Activated T-helper 1 cell treated with anti-CD3 and anti-CD28 coated beads, Interleukin-12 subunit alpha, Interleukin-12 subunit beta, Interleukin-2, Interleukin-4 antibody, amounts not matched to agents 30 ng/mL and 10 ng/mL and 1 ng/mL, durations not matched to agents 14 hours and 24 hours and 36 hours (primary cell): ENCODE measurements at regions of chr3 and their contacts with region 1.

Region 1: DNA sequence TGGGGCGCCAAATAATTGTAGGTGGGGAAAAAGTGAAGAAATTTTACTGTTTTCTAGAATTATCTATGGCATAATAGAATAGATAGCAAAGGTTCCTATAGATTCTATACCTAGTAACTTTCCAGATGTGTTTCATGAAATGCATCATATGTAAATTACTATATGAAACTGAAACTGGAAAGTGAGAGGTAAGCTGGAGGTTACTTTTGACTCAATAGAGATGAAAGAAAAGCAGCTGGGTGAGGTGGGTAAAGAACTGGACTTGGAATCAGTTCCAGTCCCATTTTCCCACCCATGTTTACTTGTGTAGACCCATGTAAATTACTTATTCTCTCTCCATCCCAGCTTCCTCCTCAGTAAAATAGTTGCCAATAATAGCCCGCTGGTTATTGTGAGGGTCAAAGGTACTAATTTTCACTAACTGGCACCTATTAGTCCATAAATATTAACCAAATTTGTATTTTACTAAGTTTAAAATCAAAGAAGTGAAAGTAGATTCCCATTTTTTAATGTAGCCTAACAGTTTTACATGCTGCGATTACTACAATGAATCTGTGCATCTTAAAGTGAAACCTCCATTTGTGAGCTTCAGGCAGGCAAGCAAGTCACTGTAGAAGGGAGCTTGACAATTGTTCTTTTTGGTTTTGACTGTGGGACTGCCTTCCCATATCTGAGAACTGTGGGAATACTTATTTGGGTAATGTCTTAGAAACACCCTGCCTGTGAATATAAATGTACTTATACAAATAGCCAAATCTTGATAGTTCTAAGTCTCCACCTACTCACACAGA is 312.1 kb downstream of the SLC9A9 start:
- DNase-seq: no peak
- H3K4me3 Mint-ChIP-seq: no peak overlapping the region
- H3K27ac Mint-ChIP-seq: no peak overlapping the region
- H3K4me1 Mint-ChIP-seq: peaks cover 14% of the 10 kb centered on the region
- H3K27me3 Mint-ChIP-seq: peaks cover 2% of the 10 kb centered on the region

Region 2: DNA sequence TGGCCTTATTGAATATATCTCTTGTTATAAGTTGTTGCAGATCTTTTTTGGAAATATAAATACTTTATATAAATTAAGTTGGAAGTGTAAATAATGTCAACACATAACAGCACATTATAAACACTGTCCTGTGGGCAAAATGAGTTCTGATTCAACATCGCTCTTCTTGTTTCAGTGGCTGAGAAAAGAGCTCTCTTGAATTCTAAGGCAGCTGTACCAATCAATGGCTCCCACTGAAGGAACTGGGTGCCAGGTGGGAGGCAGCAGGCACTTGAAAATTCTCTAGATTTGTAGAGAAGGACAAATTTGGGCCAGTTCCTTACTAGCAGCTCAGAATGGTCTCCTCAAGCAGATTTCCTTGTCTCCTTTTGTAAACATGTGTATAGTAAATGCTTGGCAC is 371.0 kb before region 1 on chr3:
- intact Hi-C with region 1: loop called (anchors 1 kb)
- DNase-seq: no peak
- H3K4me3 Mint-ChIP-seq: peak overlapping the region; percentile 52
- H3K27ac Mint-ChIP-seq: peak overlapping the region; percentile 87
- H3K4me1 Mint-ChIP-seq: peaks cover 71% of the 10 kb centered on the region
- H3K27me3 Mint-ChIP-seq: peaks cover 2% of the 10 kb centered on the region

Region 3: GRCh38 chr3:143443851-143444331 is 92.3 kb before region 1 on chr3:
- intact Hi-C with region 1: loop called (anchors 2 kb)
- DNase-seq: no peak
- H3K4me3 Mint-ChIP-seq: peak overlapping the region; percentile 3
- H3K27ac Mint-ChIP-seq: peak overlapping the region; percentile 15
- H3K4me1 Mint-ChIP-seq: peaks cover 21% of the 10 kb centered on the region
- H3K27me3 Mint-ChIP-seq: peaks cover 2% of the 10 kb centered on the region

Region 4: GRCh38 chr3:143480344-143480743 is 55.8 kb before region 1 on chr3:
- intact Hi-C with region 1: no loop called
- DNase-seq: no peak
- H3K4me3 Mint-ChIP-seq: no peak overlapping the region
- H3K27ac Mint-ChIP-seq: no peak overlapping the region
- H3K4me1 Mint-ChIP-seq: no peaks in the 10 kb centered on the region
- H3K27me3 Mint-ChIP-seq: no peaks in the 10 kb centered on the region

Region 5: DNA sequence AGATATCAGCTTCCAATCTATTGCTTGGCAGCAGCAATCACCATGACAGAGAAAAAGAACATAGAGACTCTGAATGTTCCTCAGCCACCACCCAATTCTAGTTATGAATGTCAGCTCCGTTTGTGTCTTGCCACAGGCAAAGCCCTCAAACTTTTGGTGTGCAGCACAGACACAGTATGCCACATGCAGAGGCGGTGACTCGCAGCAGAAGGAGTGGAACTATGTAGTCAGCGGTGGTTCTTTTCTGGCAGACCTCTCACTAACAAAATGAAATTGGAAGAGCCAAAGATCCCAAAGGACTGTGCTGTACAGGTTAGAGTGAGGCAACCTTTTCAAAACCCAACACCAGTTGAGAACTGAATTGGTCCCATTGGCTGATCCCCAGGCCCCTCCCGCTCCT is 91.1 kb after region 1 on chr3:
- intact Hi-C with region 1: loop called (anchors 1 kb)
- DNase-seq: no peak
- H3K4me3 Mint-ChIP-seq: no peak overlapping the region
- H3K27ac Mint-ChIP-seq: no peak overlapping the region
- H3K4me1 Mint-ChIP-seq: no peaks in the 10 kb centered on the region
- H3K27me3 Mint-ChIP-seq: no peaks in the 10 kb centered on the region

Region 6: GRCh38 chr3:143847787-143848631 is 311.8 kb after region 1 on chr3 and contains the start of gene SLC9A9:
- intact Hi-C with region 1: loop called (anchors 5 kb)
- DNase-seq: peak; percentile 11
- H3K4me3 Mint-ChIP-seq: peak within 1 kb of the TSS; percentile 94
- H3K27ac Mint-ChIP-seq: peak within 1 kb of the TSS; percentile 86
- H3K4me1 Mint-ChIP-seq: peaks cover 47% of the 10 kb centered on the region
- H3K27me3 Mint-ChIP-seq: peaks cover 5% of the 10 kb centered on the region
- total RNA-seq, gene SLC9A9: 0.64 and 0.88 TPM in 2 replicates

Region 7: DNA sequence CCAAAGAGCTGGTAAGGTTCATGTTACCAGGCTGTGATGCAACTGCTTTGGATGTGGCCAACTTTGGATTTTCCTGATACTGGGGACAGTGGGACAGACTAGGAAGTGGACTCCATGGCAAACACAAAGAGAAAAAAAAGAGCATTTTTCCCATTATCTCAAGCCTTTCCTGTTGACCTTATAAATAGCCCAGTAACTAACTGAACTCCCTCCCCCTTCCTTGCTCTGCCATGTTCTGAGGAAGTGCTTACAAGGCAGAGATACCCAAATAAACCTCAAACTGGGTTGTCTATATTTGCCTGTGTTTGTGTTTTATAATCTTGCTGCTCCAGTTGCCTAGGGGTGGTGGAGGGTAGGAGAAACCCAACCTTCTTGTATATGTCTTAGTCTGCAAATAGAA is 339.4 kb after region 1 on chr3:
- intact Hi-C with region 1: no loop called
- DNase-seq: no peak
- H3K4me3 Mint-ChIP-seq: no peak overlapping the region
- H3K27ac Mint-ChIP-seq: no peak overlapping the region
- H3K4me1 Mint-ChIP-seq: no peaks in the 10 kb centered on the region
- H3K27me3 Mint-ChIP-seq: peaks cover 1% of the 10 kb centered on the region

Region 8: DNA sequence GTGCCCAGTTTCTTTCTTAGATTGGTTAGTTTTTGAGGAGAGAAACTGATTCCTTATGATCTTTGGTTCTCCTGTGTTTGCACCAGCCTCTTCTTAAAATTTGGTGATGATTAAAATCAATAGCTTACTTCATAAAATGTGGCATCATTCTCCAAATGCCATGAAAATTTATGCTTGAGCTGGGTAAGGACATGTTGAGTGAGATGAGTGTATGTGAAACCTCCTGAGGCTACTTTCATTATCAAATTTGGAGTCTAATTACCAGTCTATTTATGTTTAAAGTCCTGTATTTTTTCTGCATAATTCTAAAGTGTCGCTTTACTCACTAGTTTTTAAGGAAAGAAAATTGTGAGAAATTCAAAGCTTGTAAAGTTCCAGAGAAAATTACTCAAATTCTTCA is 537.5 kb after region 1 on chr3:
- intact Hi-C with region 1: no loop called
- DNase-seq: no peak
- H3K4me3 Mint-ChIP-seq: no peak overlapping the region
- H3K27ac Mint-ChIP-seq: no peak overlapping the region
- H3K4me1 Mint-ChIP-seq: no peaks in the 10 kb centered on the region
- H3K27me3 Mint-ChIP-seq: peaks cover under 1% of the 10 kb centered on the region